GM10248 (cell line): ENCODE measurements at regions of chr1 and their contacts with region 1.

Region 1: DNA sequence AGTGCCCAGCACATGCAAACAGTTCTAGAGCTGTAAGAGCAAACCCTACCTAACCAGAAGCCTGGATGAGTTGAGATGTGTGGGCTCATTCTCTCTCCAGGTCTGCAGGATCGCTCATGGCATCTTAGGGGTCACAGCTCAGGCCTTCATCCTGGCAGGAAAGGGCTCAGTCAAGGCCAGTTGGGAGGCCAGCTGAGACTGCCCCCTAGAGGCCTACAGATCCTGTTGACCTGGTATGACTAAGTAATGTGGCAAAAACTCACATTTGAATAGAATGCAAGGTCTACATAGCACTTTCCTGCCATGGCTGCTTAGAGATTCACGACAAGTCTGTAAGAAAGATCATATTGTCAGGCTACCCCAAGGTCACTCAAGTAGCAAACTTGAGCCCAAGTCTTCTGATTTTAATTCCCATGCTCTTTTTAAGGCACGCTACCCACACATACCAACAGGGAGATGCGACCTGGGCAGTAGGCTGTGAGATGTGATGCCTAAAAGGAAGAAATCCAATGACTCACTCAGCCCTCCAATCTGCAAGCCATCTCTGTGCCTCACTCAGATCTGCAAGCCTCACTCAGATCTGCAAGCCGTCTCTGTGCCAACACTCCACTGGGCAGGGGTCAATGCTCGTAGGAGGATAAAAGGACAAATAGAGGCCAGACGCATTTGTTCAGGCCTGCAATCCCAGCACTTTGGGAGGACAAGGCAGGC is 5.1 kb upstream of the CAPN8 start:
- DNase-seq: no peak
- CTCF ChIP-seq: no peak

Region 2: GRCh38 chr1:223393275-223394241 is 277.1 kb before region 1 on chr1 and contains the start of gene CCDC185:
- CTCF ChIA-PET with region 1: no interaction called
- POLR2A ChIA-PET with region 1: no interaction called
- DNase-seq: no peak
- CTCF ChIP-seq: no peak

Region 3: DNA sequence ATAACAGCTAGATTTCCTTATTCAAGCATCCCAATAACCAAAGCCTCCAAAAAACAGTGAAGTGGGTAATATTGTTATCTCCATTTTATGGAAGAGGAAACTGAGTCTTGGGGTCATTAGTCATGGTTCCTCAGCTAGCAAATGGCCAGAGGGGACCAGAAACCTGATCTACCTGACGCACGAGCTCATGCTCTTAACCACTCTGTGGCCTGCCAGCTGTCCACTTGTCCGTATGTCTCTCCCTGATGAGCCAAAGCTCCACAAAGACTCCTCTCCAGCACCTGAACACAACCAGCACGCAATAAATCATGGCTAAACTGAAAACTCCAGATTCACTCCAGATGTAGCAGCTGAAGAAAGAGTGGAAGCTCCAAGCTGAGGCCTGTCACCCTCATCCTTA is 10.9 kb before region 1 on chr1:
- CTCF ChIA-PET with region 1: no interaction called
- POLR2A ChIA-PET with region 1: no interaction called
- DNase-seq: no peak
- CTCF ChIP-seq: no peak

Region 4: DNA sequence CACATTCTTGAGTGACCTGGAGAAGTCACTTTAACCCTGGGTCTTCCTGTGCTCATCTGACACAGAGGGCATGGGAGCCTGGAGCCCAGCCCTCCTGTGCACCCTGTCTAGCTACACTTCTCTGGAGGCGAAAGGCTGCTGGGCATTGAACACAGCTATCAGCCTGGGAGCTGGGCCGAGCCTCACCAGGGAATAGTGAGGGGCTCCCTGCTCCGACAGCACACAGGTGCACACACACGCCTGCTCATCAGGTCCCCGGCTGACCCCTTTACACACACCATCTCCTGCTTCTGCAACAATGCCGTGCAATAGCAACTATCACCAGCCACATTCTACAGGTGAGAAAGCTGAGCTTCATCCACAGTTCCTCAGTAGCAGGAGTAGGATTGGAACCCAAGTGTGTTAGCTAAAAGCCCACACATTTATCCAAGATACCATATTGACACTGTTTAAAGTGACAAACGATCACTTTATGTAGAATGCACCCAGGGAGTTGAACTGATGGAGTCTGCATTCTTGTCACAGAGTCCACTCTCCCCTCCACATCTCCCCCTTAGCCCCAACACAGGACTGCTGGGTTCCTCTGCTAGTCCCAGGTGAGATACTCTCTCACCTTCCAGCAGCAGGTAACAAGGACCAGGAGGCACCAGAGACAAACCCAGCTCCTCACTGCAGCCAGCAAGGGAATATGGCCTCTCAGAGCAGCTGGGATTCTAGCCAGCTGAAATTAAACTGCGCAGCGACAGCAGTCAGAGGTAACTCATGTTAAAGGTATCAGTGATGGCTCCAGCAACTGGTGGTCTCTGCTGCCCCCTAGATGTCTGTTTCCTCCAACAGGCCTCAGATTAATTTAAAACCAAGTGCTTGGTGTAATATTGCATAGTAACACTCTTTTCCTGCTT is 13.2 kb after region 1 on chr1:
- CTCF ChIA-PET with region 1: interaction called, 18 read pairs
- POLR2A ChIA-PET with region 1: no interaction called
- DNase-seq: peak; percentile 31
- CTCF ChIP-seq: peak; percentile 53

Region 5: GRCh38 chr1:223704921-223705878 is 34.6 kb after region 1 on chr1:
- CTCF ChIA-PET with region 1: no interaction called
- POLR2A ChIA-PET with region 1: no interaction called
- DNase-seq: no peak
- CTCF ChIP-seq: no peak